Activated CD8-positive, alpha-beta T cell treated with anti-CD3 and anti-CD28 coated beads for 36 hours (primary cell): ENCODE measurements at regions of chr1 and their contacts with region 1.

Region 1: DNA sequence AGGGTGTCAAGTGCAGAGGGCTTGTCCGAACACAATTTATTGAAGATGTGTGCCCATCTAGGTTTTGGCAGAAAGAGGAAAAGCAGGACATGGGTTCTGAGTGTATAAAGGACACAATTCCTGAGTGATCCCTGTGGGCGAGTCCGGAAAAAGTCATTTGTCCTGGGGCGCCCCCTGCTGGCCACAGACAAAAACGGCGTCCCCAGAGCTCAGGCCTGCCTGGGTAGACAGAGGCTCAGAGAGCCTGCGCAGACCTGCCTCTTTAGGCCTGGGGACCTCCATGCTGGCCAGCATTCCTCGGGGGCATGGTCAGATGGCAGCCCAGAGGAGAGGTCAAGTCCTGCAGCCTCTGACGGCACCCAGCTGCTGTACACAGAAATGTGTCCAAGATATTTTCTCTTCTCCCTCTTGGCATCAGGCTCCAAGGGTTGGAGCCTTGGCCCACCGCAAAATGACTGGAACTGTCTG is 65.5 kb upstream of the LRP8 start:
- DNase-seq: peak; percentile 74
- ATAC-seq: peak; percentile 92
- H3K4me3 Mint-ChIP-seq: no peak overlapping the region
- H3K27ac Mint-ChIP-seq: no peak overlapping the region
- H3K4me1 Mint-ChIP-seq: no peaks in the 10 kb centered on the region
- H3K27me3 Mint-ChIP-seq: no peaks in the 10 kb centered on the region
- CTCF ChIP-seq: peak; percentile 95

Region 2: GRCh38 chr1:53294567-53294966 is 98.8 kb before region 1 on chr1:
- CTCF ChIA-PET with region 1: interaction called, 11 read pairs
- POLR2A ChIA-PET with region 1: no interaction called
- intact Hi-C with region 1: no loop called
- DNase-seq: peak; percentile 62
- ATAC-seq: peak; percentile 84
- H3K4me3 Mint-ChIP-seq: no peak overlapping the region
- H3K27ac Mint-ChIP-seq: no peak overlapping the region
- H3K4me1 Mint-ChIP-seq: peaks cover 33% of the 10 kb centered on the region
- H3K27me3 Mint-ChIP-seq: no peaks in the 10 kb centered on the region
- CTCF ChIP-seq: no peak

Region 3: GRCh38 chr1:53367503-53368304 is 25.7 kb before region 1 on chr1:
- CTCF ChIA-PET with region 1: interaction called, 12 read pairs
- POLR2A ChIA-PET with region 1: interaction called, 3 read pairs
- intact Hi-C with region 1: no loop called
- DNase-seq: peak; percentile 63
- ATAC-seq: peak; percentile 93
- H3K4me3 Mint-ChIP-seq: peak overlapping the region; percentile 56
- H3K27ac Mint-ChIP-seq: peak overlapping the region; percentile 73
- H3K4me1 Mint-ChIP-seq: peaks cover 15% of the 10 kb centered on the region
- H3K27me3 Mint-ChIP-seq: no peaks in the 10 kb centered on the region
- CTCF ChIP-seq: no peak

Region 4: DNA sequence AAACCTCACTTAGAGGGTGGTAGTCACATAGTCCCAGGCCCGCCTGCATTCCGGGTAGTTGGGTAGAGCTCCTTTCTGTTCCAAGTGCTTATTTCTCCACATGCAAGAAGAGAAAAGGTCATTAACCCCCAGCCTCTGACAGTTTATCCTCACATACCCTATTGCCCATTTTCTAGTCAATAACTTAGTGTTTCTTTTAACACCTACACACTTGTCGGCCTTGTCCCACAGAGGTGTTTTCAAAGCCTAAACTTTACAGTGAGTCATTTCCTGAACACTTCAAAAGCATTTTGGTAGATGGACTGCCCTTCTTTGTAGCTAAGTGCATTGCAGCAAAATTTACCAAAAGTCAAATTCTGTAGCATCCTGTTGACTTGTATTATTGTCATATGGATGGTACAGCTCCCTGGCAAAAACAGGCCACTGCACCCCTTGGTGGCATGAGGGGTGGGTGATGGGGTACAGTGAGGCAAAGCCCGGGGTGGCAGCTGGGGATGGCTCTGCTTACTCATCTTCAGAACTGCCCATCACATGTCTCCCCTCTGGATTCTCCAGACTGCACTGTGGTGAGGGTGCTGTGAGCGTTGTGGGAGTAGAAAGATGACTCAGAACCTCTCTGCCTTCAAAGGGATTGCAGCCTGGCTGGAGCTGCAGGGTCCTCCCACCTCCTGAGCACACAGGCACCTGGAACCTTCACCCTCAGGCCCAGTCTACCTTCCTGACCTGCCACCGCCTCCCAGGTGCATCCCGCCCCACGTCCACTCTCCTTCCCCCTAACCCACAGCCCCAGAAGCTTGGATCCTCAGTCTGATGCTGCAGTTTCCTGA is 20.0 kb after region 1 on chr1:
- CTCF ChIA-PET with region 1: interaction called, 60 read pairs
- POLR2A ChIA-PET with region 1: interaction called, 8 read pairs
- intact Hi-C with region 1: no loop called
- DNase-seq: peak; percentile 81
- ATAC-seq: peak; percentile 76
- H3K4me3 Mint-ChIP-seq: peak overlapping the region; percentile 42
- H3K27ac Mint-ChIP-seq: peak overlapping the region; percentile 97
- H3K4me1 Mint-ChIP-seq: peaks cover 68% of the 10 kb centered on the region
- H3K27me3 Mint-ChIP-seq: no peaks in the 10 kb centered on the region
- CTCF ChIP-seq: no peak